Heart right ventricle (tissue), 16 donors: ENCODE measurements at regions of chr1 and their contacts with region 1.

Region 1: GRCh38 chr1:48572646-48573261 is 100.8 kb upstream of the SPATA6 start:
- DNase-seq: peak; percentile 14 to 28
- ATAC-seq: peak; percentile 33 to 83 (median 73)
- H3K4me3 ChIP-seq: no peak overlapping the region
- H3K27ac ChIP-seq: no peak overlapping the region
- H3K4me1 ChIP-seq: peaks cover 0 to 3% (median 0%) of the 10 kb centered on the region in 9 donors
- H3K27me3 ChIP-seq: peaks cover 0 to 18% (median 12%) of the 10 kb centered on the region in 7 donors
- CTCF ChIP-seq: peak in 8 of 9 donors; percentile 32 to 73 (median 59)

Region 2: DNA sequence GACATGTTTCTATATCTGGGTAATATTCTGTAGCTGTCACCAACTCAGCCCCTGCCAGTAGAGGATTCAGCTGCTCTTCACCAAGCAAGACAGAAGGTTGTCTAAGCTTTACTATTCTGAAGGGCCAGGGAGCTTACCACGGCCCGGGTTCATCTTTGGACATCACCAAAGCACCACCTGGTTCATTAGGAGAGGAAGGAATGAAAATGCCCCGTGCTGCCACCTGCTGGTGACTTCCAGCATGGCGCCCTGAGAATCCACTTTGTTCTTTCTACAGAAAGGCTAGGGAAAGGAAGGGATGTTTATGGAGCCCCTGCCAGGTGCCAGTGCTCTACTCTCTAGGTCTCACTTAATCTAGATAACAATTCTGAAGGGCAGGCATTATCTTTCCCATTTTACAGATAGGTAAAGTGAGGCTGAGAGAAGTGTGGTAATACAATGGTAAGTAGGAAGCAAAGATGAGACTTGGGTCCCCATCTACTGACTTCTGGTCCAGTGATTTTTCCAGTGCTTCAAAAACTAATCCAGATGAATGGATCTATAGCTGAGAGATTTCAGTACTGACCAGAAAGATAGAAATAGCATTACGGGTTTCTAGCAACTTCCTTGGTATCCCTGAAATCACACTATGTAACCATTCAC is 124.4 kb after region 1 on chr1:
- intact Hi-C with region 1: loop called (anchors 1 to 10 kb)
- DNase-seq: peak; percentile 29 to 58
- ATAC-seq: peak in 2 of 8 donors; percentile 36 to 52
- H3K4me3 ChIP-seq: no peak overlapping the region
- H3K27ac ChIP-seq: no peak overlapping the region
- H3K4me1 ChIP-seq: no peaks in the 10 kb centered on the region
- H3K27me3 ChIP-seq: peaks cover 0 to 61% (median 22%) of the 10 kb centered on the region in 7 donors
- CTCF ChIP-seq: peak; percentile 77 to 94 (median 90)

Region 3: GRCh38 chr1:48807554-48808260 is 235.0 kb after region 1 on chr1:
- intact Hi-C with region 1: loop called in 3 of 10 experiments (anchors 10 kb)
- DNase-seq: no peak
- ATAC-seq: no peak
- H3K4me3 ChIP-seq: no peak overlapping the region
- H3K27ac ChIP-seq: no peak overlapping the region
- H3K4me1 ChIP-seq: no peaks in the 10 kb centered on the region
- H3K27me3 ChIP-seq: peaks cover 0 to 23% (median 0%) of the 10 kb centered on the region in 7 donors
- CTCF ChIP-seq: no peak